ENCODE measurements at regions of chr1 and their contacts with region 1.

Region 1: GRCh38 chr1:77725706-77726105 is 33.9 kb downstream of the USP33 start:
- DNase-seq: no peak
- H3K4me3 ChIP-seq: no peak overlapping the region
- H3K27ac ChIP-seq: no peak overlapping the region
- H3K4me1 ChIP-seq: no peaks in the 10 kb centered on the region
- H3K27me3 ChIP-seq: no peaks in the 10 kb centered on the region
- CTCF ChIP-seq: no peak

Region 2: DNA sequence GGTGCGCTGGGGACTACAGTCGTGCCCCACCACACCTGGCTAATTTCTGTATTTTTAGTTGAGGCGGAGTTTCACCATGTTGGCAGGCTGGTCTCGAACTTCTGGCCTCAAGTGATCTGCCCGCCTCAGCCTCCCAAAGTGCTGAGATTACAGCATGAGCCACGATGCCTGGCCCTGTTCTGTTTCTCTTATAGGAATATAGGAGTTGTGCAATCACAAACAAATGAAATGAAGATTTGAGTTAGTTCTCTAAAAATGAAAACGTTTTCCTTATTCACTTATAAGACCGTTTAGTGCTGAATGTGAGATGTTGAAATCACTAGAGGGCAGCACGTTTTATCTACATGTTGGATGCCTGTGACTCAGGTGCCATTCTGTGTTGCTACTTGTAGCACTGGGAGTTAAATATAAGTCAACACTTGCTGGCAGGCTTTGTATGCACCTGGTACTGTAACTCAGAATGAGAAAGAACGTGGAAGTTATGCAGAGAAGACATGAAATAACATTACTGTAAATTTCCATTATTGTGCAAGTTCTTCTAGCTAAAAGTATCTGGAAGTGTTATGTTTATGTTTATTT is 99.5 kb after region 1 on chr1:
- CTCF ChIA-PET with region 1: no interaction called
- POLR2A ChIA-PET with region 1: no interaction called
- intact Hi-C with region 1: no loop called
- DNase-seq: peak in 1 of 2 experiments; percentile 57
- H3K4me3 ChIP-seq: no peak overlapping the region
- H3K27ac ChIP-seq: no peak overlapping the region
- H3K4me1 ChIP-seq: peaks cover 17% of the 10 kb centered on the region
- H3K27me3 ChIP-seq: no peaks in the 10 kb centered on the region
- CTCF ChIP-seq: no peak; the same call in 1 of the 2 replicates

Region 3: GRCh38 chr1:77961392-77961791 is 235.7 kb after region 1 on chr1:
- CTCF ChIA-PET with region 1: no interaction called
- POLR2A ChIA-PET with region 1: no interaction called
- intact Hi-C with region 1: loop called (anchors 10 kb)
- DNase-seq: no peak
- H3K4me3 ChIP-seq: no peak overlapping the region
- H3K27ac ChIP-seq: no peak overlapping the region
- H3K4me1 ChIP-seq: no peaks in the 10 kb centered on the region
- H3K27me3 ChIP-seq: no peaks in the 10 kb centered on the region
- CTCF ChIP-seq: no peak

Measured in PC-9 (cell line).